PC-9 (cell line): ENCODE measurements at regions of chr3 and their contacts with region 1.

Region 1: DNA sequence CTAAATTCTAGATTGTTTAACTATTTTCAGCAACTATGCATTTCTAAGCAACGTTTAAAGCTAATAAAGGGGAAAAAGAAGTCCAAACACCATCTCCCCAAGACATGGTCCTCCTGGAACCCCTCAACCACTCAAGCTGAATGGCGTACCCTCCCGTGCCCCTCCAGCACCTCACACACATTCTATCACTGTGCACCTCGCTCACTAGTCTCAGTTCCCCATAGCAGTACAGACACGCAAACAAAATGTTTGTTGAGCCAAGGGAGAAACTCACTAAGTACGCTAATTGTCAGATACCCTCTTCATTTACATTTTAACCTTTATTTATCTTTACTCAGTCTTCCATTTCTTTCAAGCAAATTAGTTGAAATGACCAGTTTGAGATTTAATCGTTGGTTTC is 48.8 kb downstream of the ACAP2 start:
- DNase-seq: no peak
- H3K4me3 ChIP-seq: no peak overlapping the region
- H3K27ac ChIP-seq: no peak overlapping the region
- H3K4me1 ChIP-seq: peaks cover 13% of the 10 kb centered on the region; the same call in 1 of the 2 replicates
- H3K27me3 ChIP-seq: no peaks in the 10 kb centered on the region
- CTCF ChIP-seq: no peak

Region 2: DNA sequence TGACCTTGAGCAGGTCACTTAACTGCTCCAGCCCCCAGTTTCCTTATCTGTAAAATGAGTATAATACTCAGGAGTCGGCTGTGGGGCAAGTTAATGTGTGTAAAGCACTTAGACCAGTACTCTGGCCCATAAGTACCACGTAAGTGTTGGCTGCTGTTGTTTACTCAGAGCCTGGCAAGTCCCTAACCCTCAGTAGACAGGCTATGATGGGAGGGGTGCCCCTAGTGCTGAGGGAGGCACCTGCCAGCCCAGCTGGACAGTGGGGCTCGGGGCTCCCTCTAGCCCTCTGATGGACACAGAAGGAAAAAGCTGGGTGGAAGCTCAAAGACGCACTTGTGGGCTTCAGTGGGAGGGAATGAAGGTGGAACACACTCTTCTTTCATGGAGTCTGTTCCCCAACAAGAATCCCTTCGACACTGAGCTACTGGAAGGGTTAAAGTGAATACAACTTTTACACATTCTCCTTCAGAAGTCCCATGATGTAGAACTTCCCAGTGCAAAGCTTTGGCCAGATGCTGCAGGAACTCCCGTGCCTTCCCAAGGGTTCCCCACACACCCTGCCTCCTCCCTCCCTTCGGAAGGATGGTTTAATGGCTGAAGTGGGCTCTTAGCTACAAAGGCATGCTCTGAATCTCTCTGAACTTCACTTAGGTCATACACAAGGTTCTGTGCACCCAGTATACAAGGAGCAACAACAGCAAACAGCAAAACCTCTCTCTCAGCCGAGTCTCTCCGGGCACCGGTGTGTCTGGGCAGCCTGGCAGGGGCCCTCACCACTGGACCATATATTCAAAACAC is 786.2 kb before region 1 on chr3:
- CTCF ChIA-PET with region 1: no interaction called
- POLR2A ChIA-PET with region 1: interaction called, 22 read pairs
- intact Hi-C with region 1: no loop called
- DNase-seq: no peak
- H3K4me3 ChIP-seq: no peak overlapping the region
- H3K27ac ChIP-seq: no peak overlapping the region
- H3K4me1 ChIP-seq: no peaks in the 10 kb centered on the region
- H3K27me3 ChIP-seq: no peaks in the 10 kb centered on the region
- CTCF ChIP-seq: no peak